GM12878 (cell line): ENCODE measurements at regions of chr13 and their contacts with region 1.

Region 1: DNA sequence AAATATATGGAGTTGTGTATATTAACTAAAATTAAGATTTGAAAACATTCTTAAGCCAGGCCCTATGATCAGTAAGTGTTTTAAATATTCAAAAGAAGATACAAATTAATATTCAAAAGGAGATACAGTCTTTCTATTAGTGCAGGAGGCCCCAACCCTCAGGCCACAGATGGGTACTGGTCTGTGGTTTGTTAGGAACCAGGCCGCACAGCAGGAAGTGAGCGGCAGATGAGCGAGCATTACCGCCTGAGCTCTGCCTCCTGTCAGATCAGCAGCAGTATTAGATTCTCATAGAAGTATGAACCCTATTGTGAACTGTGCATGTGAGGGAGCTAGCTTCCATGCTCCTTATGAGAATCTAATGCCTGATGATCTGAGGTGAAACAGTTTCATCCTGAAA is 232.9 kb downstream of the FOXO1 start:
- DNase-seq: no peak
- ATAC-seq: peak; percentile 65
- H3K4me3 ChIP-seq: no peak overlapping the region
- H3K27ac ChIP-seq: no peak overlapping the region
- H3K4me1 ChIP-seq: peaks cover 19% of the 10 kb centered on the region
- H3K27me3 ChIP-seq: no peaks in the 10 kb centered on the region
- CTCF ChIP-seq: no peak
- EP300 ChIP-seq: no peak
- POLR2A ChIP-seq: no peak
- RAD21 ChIP-seq: no peak

Region 2: DNA sequence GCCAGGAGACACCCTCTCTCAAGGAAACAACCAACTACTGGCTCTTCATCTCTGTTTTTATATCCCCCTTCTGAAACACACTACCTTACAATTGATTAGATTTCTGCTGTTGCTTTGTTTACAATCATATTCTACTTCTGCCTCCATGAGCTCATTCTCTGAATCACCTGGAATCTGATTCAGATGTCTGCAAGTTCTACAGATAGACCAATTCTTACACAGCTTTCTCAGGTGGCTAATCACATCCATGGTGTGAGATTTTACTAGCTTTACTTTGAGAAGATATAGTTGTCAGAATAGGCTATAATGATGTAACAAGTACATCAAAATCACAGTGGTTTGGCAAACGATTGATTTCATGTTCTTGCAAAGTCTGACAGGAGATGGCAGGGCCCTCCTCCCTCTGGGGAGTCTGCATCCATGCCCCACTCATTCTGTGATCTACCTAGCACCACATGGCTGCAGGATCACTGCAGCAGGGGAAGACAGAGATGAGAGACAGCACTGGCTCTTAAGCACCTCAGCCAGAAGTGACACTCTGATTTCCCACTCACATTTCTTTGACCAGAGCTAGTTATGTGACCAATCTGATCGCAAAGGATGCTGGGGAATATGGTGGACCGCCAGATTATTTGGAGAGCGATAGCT is 10.9 kb before region 1 on chr13:
- CTCF ChIA-PET with region 1: interaction called, 3 read pairs
- POLR2A ChIA-PET with region 1: interaction called, 6 read pairs
- RAD21 ChIA-PET with region 1: interaction called, 6 read pairs
- SMC1A ChIA-PET with region 1: interaction called, 15 read pairs
- in situ Hi-C with region 1: no loop called
- intact Hi-C with region 1: no loop called
- DNase-seq: no peak
- ATAC-seq: peak; percentile 12; the same call in 1 of the 3 replicates
- H3K4me3 ChIP-seq: no peak overlapping the region
- H3K27ac ChIP-seq: no peak overlapping the region
- H3K4me1 ChIP-seq: peaks cover 17% of the 10 kb centered on the region
- H3K27me3 ChIP-seq: no peaks in the 10 kb centered on the region
- CTCF ChIP-seq: no peak
- EP300 ChIP-seq: no peak
- POLR2A ChIP-seq: no peak
- RAD21 ChIP-seq: no peak

Region 3: DNA sequence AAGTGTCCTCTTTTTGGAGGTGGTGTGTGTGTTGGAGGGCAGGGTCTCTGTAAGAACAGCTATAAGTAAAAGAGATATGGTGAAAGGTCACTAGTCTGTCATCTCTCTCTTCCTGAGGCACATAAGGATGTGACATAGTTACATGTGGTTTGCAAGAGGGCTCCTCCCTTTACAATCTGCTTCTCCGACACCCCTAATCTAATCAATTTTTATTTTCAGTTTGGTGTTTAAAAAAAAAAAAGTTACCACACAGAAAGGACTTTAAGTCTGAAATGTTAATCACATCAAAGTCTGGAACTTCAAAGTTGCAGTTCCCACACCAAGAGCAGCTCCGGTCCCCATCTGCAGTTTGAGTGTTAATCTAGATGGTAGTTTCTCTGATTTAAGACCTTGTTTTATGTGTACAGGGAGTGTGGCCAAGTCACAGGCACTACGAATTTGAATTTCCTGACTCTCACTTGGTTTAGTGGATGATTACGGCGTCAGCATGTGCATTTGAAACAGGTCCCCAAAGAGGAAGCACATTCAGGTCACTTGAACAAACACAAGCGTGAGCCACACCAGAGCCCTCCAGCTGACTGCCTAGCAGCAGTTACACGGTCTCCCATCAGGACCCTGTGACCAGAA is 179.7 kb after region 1 on chr13:
- CTCF ChIA-PET with region 1: no interaction called
- POLR2A ChIA-PET with region 1: no interaction called
- RAD21 ChIA-PET with region 1: no interaction called
- SMC1A ChIA-PET with region 1: no interaction called
- in situ Hi-C with region 1: no loop called
- intact Hi-C with region 1: no loop called
- DNase-seq: peak; percentile 64
- ATAC-seq: peak; percentile 89
- H3K4me3 ChIP-seq: peak overlapping the region; percentile 25; the same call in 1 of the 2 replicates
- H3K27ac ChIP-seq: peak overlapping the region; percentile 29
- H3K4me1 ChIP-seq: peaks cover 19% of the 10 kb centered on the region
- H3K27me3 ChIP-seq: no peaks in the 10 kb centered on the region
- CTCF ChIP-seq: no peak
- EP300 ChIP-seq: no peak
- POLR2A ChIP-seq: peak; percentile 55
- RAD21 ChIP-seq: no peak